Mammary epithelial cell (primary cell): ENCODE measurements at regions of chr1 and their contacts with region 1.

Region 1: DNA sequence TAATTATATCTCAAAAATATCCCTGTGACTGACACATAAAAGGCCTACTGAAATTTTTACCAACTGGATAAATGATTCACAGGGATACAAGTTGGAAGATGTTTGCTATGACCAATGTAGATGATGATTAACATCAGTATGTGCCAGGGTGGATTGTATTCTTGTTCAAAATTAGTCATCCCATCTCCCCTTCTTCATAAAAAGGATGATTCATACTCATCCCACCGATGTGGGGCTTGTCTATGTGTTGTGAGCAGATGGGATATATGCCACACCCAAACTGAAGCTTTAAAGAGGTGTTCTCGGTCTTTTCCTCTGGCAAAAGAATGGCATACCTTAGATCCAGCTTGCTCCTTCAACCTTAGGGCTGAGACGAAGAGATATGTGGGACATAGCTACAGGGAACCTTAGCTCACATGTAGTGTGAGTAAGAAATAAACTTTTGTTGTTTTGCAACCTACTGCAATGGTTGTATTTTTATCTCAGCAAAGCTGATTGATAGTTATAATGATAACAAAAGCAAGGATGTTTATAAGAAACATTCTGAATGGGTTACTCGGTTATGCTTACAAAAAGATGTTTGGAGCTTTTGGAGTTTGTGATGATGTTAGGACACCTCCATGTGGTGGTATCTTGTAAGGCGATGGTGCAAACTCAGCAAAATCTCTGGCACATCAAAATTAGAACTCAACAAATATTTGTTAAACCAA is 29.4 kb downstream of the SPATA17 start:
- DNase-seq: peak; percentile 98
- H3K4me3 ChIP-seq: peak overlapping the region in 2 of 3 experiments; percentile 6 to 14
- H3K27ac ChIP-seq: peak overlapping the region; percentile 79
- H3K4me1 ChIP-seq: peaks cover 20% of the 10 kb centered on the region
- H3K27me3 ChIP-seq: no peaks in the 10 kb centered on the region
- CTCF ChIP-seq: peak; percentile 48 to 62

Region 2: DNA sequence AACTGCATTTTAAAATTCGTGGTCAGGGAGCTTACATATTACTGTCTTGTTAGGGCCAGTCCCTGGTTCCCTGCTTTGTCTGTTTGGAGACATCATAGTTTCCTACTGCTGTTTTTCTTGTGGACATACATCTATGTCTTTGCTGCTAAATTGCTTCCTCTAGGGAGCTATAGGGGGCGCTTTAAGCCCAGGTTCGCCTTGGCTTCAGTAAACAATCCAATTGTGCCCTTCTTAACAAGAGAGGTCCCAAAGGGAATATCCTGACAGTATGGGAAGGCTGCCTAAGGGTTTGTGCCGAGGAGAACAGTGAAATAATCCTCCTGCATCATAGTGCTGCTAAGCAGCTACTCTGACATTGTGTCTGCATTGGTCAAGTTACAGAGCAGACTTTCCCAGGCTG is 1349.7 kb before region 1 on chr1:
- CTCF ChIA-PET with region 1: no interaction called
- dilution Hi-C with region 1: no loop called
- in situ Hi-C with region 1: no loop called
- intact Hi-C with region 1: loop called (anchors 5 kb)
- DNase-seq: peak; percentile 44
- H3K4me3 ChIP-seq: no peak overlapping the region
- H3K27ac ChIP-seq: no peak overlapping the region
- H3K4me1 ChIP-seq: peaks cover 5% of the 10 kb centered on the region
- H3K27me3 ChIP-seq: peaks cover 3% of the 10 kb centered on the region
- CTCF ChIP-seq: peak; percentile 78 to 82

Region 3: GRCh38 chr1:216961516-216961915 is 699.0 kb before region 1 on chr1:
- CTCF ChIA-PET with region 1: no interaction called
- dilution Hi-C with region 1: no loop called
- in situ Hi-C with region 1: no loop called
- intact Hi-C with region 1: loop called (anchors 2 kb)
- DNase-seq: no peak
- H3K4me3 ChIP-seq: no peak overlapping the region
- H3K27ac ChIP-seq: no peak overlapping the region
- H3K4me1 ChIP-seq: no peaks in the 10 kb centered on the region
- H3K27me3 ChIP-seq: no peaks in the 10 kb centered on the region
- CTCF ChIP-seq: peak in 1 of 2 donors; percentile 24

Region 4: GRCh38 chr1:217431393-217431792 is 229.1 kb before region 1 on chr1:
- CTCF ChIA-PET with region 1: interaction called, 7 read pairs
- dilution Hi-C with region 1: no loop called
- in situ Hi-C with region 1: no loop called
- intact Hi-C with region 1: loop called (anchors 1 kb)
- DNase-seq: no peak
- H3K4me3 ChIP-seq: no peak overlapping the region
- H3K27ac ChIP-seq: no peak overlapping the region
- H3K4me1 ChIP-seq: peaks cover 7% of the 10 kb centered on the region
- H3K27me3 ChIP-seq: no peaks in the 10 kb centered on the region
- CTCF ChIP-seq: peak in 1 of 2 donors; percentile 49

Region 5: GRCh38 chr1:217562229-217562878 is 98.2 kb before region 1 on chr1:
- CTCF ChIA-PET with region 1: no interaction called
- dilution Hi-C with region 1: no loop called
- in situ Hi-C with region 1: no loop called
- intact Hi-C with region 1: loop called (anchors 1 kb)
- DNase-seq: peak; percentile 75
- H3K4me3 ChIP-seq: peak overlapping the region in 2 of 3 experiments; percentile 17 to 36
- H3K27ac ChIP-seq: peak overlapping the region; percentile 85
- H3K4me1 ChIP-seq: peaks cover 18% of the 10 kb centered on the region
- H3K27me3 ChIP-seq: no peaks in the 10 kb centered on the region
- CTCF ChIP-seq: no peak

Region 6: GRCh38 chr1:217687509-217687908 is 27.0 kb after region 1 on chr1:
- CTCF ChIA-PET with region 1: no interaction called
- dilution Hi-C with region 1: no loop called
- in situ Hi-C with region 1: no loop called
- intact Hi-C with region 1: no loop called
- DNase-seq: no peak
- H3K4me3 ChIP-seq: no peak overlapping the region
- H3K27ac ChIP-seq: no peak overlapping the region
- H3K4me1 ChIP-seq: no peaks in the 10 kb centered on the region
- H3K27me3 ChIP-seq: no peaks in the 10 kb centered on the region
- CTCF ChIP-seq: no peak